ENCODE measurements at regions of chr3 and their contacts with region 1.

Region 1: GRCh38 chr3:23834082-23834870 is 28.5 kb downstream of the UBE2E1 start:
- DNase-seq: no peak
- H3K4me3 Mint-ChIP-seq: no peak overlapping the region
- H3K27ac Mint-ChIP-seq: no peak overlapping the region
- H3K4me1 Mint-ChIP-seq: peaks cover 17% of the 10 kb centered on the region
- H3K27me3 Mint-ChIP-seq: no peaks in the 10 kb centered on the region
- CTCF ChIP-seq: peak; percentile 13

Region 2: DNA sequence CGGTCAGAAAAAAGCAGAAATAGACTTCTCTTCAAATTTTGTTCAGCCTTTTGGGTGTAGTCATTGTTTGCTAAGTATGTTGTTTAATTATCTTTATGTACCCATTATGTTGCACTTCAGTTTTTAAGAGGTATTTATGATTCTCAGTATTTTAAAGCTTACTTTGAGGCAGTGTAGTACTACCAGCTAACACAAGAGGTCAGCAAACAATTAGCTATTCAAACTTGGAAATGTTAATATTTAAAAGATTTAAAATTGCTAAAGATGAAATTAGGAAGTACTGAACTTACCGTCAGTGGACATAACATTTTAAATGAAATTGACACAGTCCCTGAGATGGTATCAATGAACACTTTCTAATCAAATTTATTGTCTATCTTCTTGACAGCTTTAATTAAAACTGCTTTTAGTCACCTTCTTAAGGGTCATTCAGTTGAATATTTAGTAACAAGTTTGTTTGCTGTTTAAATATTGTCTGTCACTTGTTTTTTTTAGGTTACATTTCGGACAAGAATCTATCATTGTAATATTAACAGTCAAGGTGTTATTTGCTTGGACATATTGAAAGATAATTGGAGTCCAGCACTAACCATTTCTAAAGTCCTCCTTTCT is 54.4 kb after region 1 on chr3:
- CTCF ChIA-PET with region 1: interaction called, 4 read pairs
- POLR2A ChIA-PET with region 1: interaction called, 3 read pairs
- intact Hi-C with region 1: loop called (anchors 2 kb)
- DNase-seq: peak; percentile 35
- H3K4me3 Mint-ChIP-seq: no peak overlapping the region
- H3K27ac Mint-ChIP-seq: no peak overlapping the region
- H3K4me1 Mint-ChIP-seq: peaks cover 6% of the 10 kb centered on the region
- H3K27me3 Mint-ChIP-seq: no peaks in the 10 kb centered on the region
- CTCF ChIP-seq: peak; percentile 72

Measured in MCF 10A (cell line).